ENCODE measurements at regions of chr19 and their contacts with region 1.

Region 1: GRCh38 chr19:8580710-8581281 is 3.6 kb upstream of the MYO1F start:
- DNase-seq: peak; percentile 96
- H3K4me3 Mint-ChIP-seq: no peak overlapping the region
- H3K27ac Mint-ChIP-seq: no peak overlapping the region
- H3K4me1 Mint-ChIP-seq: peaks cover 26% of the 10 kb centered on the region
- H3K27me3 Mint-ChIP-seq: peaks cover 4% of the 10 kb centered on the region

Region 2: GRCh38 chr19:8412783-8413628 is 167.8 kb before region 1 on chr19 and contains the start of gene MARCHF2:
- intact Hi-C with region 1: loop called (anchors 2 kb)
- DNase-seq: peak; percentile 99
- H3K4me3 Mint-ChIP-seq: peak within 1 kb of the TSS; percentile 52
- H3K27ac Mint-ChIP-seq: peak within 1 kb of the TSS; percentile 29
- H3K4me1 Mint-ChIP-seq: peaks cover 8% of the 10 kb centered on the region
- H3K27me3 Mint-ChIP-seq: no peaks in the 10 kb centered on the region
- total RNA-seq, gene MARCHF2: 7.9 and 8.8 TPM in 2 replicates

Region 3: DNA sequence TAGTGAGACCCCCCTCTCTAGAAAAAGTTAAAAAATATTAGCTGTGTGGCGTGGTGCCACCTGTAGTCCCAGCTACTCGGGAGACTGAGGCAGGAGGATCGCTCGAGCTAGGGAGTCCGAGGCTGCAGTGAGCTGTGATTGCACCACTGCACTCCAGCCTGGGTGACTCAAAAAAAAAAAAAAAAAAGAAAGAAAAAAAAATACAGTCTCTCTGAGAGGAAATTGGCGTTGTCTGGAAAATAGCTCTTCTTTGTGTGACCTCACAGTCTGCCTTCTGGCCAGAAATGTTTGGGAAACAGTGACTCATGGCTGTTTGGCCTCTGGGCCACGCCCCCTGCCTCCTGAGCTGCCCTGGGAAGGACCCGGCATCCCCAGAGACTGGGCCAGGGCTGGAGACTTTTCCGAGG is 157.0 kb before region 1 on chr19:
- intact Hi-C with region 1: no loop called
- DNase-seq: no peak
- H3K4me3 Mint-ChIP-seq: no peak overlapping the region
- H3K27ac Mint-ChIP-seq: peak overlapping the region; percentile 37
- H3K4me1 Mint-ChIP-seq: no peaks in the 10 kb centered on the region
- H3K27me3 Mint-ChIP-seq: no peaks in the 10 kb centered on the region

Region 4: DNA sequence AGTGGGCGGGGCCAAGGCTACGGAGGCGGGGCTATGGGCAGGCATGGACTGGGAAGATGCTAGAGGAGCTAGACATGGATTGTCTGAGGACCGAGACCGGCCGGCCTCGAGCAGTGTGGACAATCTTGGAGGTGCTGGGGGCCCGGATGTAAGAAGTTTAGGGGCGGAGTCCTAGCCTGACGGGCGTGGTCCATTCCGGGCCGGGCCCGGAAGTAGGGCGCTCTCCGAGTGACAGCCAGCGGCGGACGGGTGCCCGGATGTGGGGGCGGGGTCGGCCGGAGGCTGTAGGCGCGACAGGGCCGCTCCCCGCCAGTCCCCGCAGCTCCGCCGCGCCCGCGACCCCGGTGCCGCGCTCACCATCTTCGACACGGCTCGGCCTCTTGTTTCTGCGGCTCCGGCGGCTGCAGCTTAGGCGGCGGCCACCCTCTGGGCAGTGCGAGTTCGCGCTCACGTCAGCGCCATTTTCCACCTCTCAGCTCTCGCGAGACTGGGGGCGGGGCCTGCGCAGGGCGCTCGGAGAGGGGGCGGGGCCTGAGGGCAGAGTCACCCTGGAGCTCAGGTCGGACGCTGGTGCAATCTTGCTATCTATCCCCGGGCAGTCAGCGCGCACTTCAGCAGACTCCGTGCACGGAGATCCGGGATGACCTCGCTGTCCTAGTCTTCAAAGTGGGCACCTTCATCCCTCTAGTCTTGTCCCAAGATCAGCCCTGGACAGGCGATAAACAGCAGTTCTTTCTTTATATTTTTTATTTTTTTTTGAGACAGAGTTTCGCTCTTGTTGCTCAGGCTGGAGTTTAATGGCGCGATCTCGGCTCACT is 66.9 kb before region 1 on chr19 and contains the start of gene ZNF414:
- intact Hi-C with region 1: loop called (anchors 2 kb)
- DNase-seq: peak; percentile 98
- H3K4me3 Mint-ChIP-seq: peak within 1 kb of the TSS; percentile 94
- H3K27ac Mint-ChIP-seq: peak within 1 kb of the TSS; percentile 100
- H3K4me1 Mint-ChIP-seq: peaks cover 38% of the 10 kb centered on the region
- H3K27me3 Mint-ChIP-seq: no peaks in the 10 kb centered on the region
- total RNA-seq, gene ZNF414: 18.1 and 25.6 TPM in 2 replicates

Region 5: DNA sequence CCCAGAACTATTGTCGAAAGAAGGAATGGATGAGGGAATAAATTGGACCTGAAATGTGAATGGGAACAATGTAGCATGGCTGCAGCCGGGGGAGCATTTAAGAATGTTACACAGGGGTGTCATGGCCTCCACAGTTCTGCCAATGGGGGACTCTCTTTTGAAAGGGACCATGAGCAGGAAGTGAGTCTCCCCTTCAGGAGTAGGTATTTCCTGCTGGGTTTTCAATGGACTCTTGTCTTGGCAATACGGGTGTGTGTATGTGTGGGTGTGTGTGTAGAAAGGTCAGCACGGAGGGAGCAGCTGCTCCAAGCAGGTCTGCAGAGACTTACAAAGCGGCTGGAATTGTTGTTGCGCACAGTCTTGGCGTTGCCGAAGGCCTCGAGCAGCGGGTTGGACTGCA is 28.0 kb before region 1 on chr19:
- intact Hi-C with region 1: no loop called
- DNase-seq: no peak
- H3K4me3 Mint-ChIP-seq: no peak overlapping the region
- H3K27ac Mint-ChIP-seq: no peak overlapping the region
- H3K4me1 Mint-ChIP-seq: peaks cover 9% of the 10 kb centered on the region
- H3K27me3 Mint-ChIP-seq: no peaks in the 10 kb centered on the region

Region 6: DNA sequence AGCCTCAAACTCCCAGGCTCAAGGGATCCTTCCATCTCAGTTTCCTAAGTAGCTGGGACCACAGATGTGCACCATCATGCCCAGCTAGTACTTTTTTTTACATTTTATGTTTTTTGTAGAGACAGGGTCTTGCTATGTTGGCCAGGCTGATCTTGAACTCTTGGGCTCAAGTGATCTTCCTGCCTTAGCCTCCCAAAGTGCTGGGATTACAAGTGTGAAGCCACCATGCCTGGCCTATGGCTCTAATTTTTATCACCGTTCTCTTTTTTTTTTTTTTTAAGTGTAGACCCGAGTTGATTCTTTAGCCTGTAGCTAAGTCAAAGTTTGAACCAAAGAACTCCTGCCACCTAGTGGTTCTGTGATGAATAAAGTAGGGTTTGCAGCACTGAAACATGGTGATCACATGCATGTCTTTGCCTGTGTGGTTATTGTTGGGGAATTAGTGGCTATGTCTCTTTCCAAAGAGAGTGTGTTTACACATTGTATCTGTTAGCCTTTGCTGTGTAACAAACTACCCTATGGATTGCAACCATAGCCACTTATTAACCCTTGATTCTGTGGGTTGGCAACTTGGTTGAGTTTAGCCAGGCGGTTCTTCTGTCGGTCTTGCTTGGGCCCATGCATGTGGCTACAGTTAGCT is 61.2 kb after region 1 on chr19:
- intact Hi-C with region 1: loop called (anchors 2 kb)
- DNase-seq: peak; percentile 74
- H3K4me3 Mint-ChIP-seq: no peak overlapping the region
- H3K27ac Mint-ChIP-seq: no peak overlapping the region
- H3K4me1 Mint-ChIP-seq: peaks cover 5% of the 10 kb centered on the region
- H3K27me3 Mint-ChIP-seq: peaks cover 15% of the 10 kb centered on the region

Region 7: DNA sequence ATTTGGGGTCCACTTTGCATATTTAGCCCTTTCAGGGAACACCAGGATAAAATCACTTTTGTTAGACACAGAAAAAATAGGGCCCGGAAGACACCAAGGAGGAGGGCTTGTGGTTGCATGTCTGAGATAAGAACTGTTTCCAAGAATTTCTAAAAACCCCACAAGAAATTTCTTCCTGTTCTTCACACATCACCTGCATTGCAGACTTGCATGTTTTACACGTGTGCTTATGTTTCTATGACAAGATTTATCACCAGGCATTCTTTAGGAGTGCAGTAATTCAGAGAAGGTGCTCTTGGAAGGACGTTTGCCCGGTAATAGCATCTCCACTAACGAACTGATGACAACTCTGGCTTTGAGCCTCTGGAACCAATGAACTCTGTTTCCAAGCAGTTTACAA is 124.9 kb after region 1 on chr19:
- intact Hi-C with region 1: no loop called
- DNase-seq: peak; percentile 76
- H3K4me3 Mint-ChIP-seq: peak overlapping the region; percentile 48
- H3K27ac Mint-ChIP-seq: peak overlapping the region; percentile 67
- H3K4me1 Mint-ChIP-seq: peaks cover 45% of the 10 kb centered on the region
- H3K27me3 Mint-ChIP-seq: peaks cover 9% of the 10 kb centered on the region